ENCODE measurements at regions of chr16 and their contacts with region 1.

Region 1: GRCh38 chr16:84995663-84996062 is 15.7 kb downstream of the ZDHHC7 start:
- DNase-seq: no peak
- ATAC-seq: no peak

Region 2: DNA sequence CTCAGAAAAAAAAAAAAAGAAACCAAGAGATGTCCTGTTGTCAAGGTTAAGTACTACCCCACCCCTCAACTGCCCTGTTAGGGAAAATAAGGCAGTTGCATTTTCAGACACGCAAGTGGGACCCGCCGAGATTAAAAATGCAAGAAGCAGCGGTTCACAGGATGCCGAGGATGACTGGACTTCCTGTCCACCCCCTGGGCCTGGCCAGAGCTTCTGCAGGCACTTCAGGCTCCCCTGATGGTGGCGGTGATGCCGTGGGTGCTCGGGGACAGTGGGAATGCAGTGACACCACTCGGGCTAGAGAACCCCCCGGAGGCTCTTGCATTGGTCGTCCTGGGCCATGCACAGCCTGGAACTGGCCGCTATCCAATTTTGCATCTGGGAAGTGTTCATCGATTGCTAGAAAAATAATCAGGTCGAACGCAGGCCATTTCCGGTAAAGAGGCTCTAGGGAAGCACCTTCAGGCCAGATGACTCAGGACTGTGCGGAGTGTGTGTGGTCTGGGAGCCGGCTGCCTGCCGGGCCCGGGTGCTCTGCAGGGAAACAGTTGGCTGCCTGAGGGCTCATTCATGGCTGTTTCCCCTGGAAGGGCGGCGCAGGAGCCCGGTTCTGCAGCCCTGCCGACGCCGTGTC is 189.3 kb before region 1 on chr16:
- intact Hi-C with region 1: no loop called
- DNase-seq: peak; percentile 70
- ATAC-seq: peak; percentile 81

Region 3: DNA sequence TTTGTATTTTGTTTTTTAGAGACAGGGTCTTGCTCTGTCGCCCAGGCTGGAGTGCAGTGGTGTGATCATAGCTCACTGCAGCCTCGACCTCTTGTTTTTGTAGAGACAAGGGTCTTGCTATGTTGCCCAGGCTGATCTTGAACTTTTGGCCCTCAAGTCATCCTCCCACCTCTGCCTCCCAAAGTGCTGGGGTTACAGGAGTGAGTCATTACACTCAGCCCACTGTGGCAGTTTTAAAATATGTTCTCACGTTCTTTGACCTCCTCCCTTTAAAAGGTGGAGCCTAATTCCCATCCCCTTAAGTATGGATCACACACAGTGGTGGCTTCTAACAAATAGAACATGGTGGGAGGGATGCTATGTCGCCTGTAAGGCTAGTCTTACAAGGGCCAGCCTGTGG is 52.0 kb before region 1 on chr16:
- intact Hi-C with region 1: loop called (anchors 2 kb)
- DNase-seq: no peak
- ATAC-seq: no peak